ENCODE measurements at regions of chr2 and their contacts with region 1.

Region 1: GRCh38 chr2:225425284-225425683 is 25.8 kb downstream of the NYAP2 start:
- DNase-seq: no peak
- ATAC-seq: no peak
- H3K4me3 ChIP-seq: no peak overlapping the region
- H3K4me3 Mint-ChIP-seq: no peak overlapping the region
- H3K27ac ChIP-seq: no peak overlapping the region
- H3K27ac Mint-ChIP-seq: no peak overlapping the region
- H3K4me1 ChIP-seq: no peaks in the 10 kb centered on the region
- H3K4me1 Mint-ChIP-seq: no peaks in the 10 kb centered on the region
- H3K27me3 ChIP-seq: no peaks in the 10 kb centered on the region
- H3K27me3 Mint-ChIP-seq: peaks cover 10 to 16% of the 10 kb centered on the region in 2 donors

Region 2: GRCh38 chr2:225122583-225123486 is 302.4 kb before region 1 on chr2:
- CTCF ChIA-PET with region 1: no interaction called
- POLR2A ChIA-PET with region 1: interaction called in 1 of 2 experiments, 10 read pairs
- DNase-seq: peak in 14 of 35 experiments; percentile 3 to 45 (median 14)
- ATAC-seq: no peak
- H3K4me3 ChIP-seq: no peak overlapping the region
- H3K4me3 Mint-ChIP-seq: no peak overlapping the region
- H3K27ac ChIP-seq: no peak overlapping the region
- H3K27ac Mint-ChIP-seq: peak overlapping the region in 1 of 2 donors; percentile 29
- H3K4me1 ChIP-seq: no peaks in the 10 kb centered on the region
- H3K4me1 Mint-ChIP-seq: peaks cover 0 to 5% (median 0%) of the 10 kb centered on the region in 3 donors
- H3K27me3 ChIP-seq: no peaks in the 10 kb centered on the region
- H3K27me3 Mint-ChIP-seq: peaks cover 2 to 6% of the 10 kb centered on the region in 2 donors

Region 3: DNA sequence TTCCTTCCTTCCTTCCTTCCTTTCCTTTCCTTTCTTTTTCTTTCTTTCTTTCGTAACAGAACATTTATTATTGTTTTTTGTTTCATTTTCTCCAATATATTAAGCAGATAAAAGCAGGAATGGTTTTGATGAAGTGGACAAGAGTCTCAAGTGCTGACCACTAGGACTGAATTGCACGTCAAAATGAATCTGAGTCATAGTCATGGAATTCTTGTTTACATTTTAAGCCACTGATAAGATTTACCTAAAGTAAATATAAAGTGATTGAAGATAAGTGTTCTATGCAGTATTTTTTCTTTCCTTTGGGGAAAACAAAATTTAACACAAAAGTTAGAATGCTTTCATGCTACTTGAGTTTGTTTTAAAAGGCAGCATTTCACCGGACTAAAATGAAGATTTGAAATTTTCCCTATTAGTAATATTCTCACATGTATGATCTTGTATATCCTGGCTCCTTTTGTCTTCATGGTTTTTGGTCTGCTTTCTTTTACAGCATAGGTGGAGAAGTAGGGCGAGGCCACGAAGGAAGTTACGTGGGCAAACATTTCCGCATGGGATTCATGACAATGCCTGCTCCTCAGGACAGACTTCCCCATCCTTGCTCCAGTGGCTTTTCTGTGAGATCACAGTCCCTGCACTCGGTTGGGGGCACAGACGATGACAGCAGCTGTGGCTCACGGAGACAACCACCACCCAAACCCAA is 87.7 kb after region 1 on chr2:
- CTCF ChIA-PET with region 1: no interaction called
- POLR2A ChIA-PET with region 1: no interaction called
- DNase-seq: no peak
- ATAC-seq: no peak
- H3K4me3 ChIP-seq: no peak overlapping the region
- H3K4me3 Mint-ChIP-seq: no peak overlapping the region
- H3K27ac ChIP-seq: no peak overlapping the region
- H3K27ac Mint-ChIP-seq: no peak overlapping the region
- H3K4me1 ChIP-seq: no peaks in the 10 kb centered on the region
- H3K4me1 Mint-ChIP-seq: no peaks in the 10 kb centered on the region
- H3K27me3 ChIP-seq: peaks cover 0 to 3% of the 10 kb centered on the region in 2 experiments
- H3K27me3 Mint-ChIP-seq: peaks cover 0 to 21% of the 10 kb centered on the region in 2 donors

Region 4: DNA sequence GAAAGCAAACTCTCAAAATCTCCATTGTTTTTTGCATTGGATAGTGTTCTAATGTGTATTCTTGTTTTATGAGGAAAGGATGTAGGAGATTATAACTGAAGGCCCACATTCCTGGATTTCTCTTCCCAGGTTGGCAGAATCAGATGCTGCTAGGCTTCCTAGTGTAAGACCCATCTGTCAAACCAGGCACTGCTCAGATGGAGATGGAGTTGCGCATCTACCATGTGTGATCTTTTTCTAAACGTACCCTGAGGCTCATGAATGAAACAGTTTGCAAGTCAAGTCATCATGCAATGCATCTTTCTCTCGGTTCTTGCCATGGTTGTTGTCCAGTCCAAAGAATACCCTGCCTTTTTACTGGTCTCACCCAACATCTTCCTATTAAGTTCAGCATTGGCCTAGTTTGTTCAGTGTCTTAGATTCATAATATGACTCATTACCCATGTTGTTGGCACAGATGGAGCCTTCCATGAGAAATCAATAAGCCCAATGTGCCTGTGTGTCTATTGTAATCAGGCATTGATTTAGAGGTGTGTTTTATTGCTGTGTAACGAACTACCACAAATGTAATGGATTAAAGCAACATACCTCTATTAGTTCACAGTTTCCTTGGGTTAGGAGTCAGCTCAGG is 101.6 kb after region 1 on chr2:
- CTCF ChIA-PET with region 1: no interaction called
- POLR2A ChIA-PET with region 1: no interaction called
- DNase-seq: no peak
- ATAC-seq: no peak
- H3K4me3 ChIP-seq: no peak overlapping the region
- H3K4me3 Mint-ChIP-seq: no peak overlapping the region
- H3K27ac ChIP-seq: no peak overlapping the region
- H3K27ac Mint-ChIP-seq: no peak overlapping the region
- H3K4me1 ChIP-seq: no peaks in the 10 kb centered on the region
- H3K4me1 Mint-ChIP-seq: no peaks in the 10 kb centered on the region
- H3K27me3 ChIP-seq: peaks cover 0 to 2% of the 10 kb centered on the region in 2 experiments
- H3K27me3 Mint-ChIP-seq: peaks cover 9 to 25% of the 10 kb centered on the region in 2 donors

Measured in T-cell (primary cell).